Activated CD8-positive, alpha-beta T cell treated with anti-CD3 and anti-CD28 coated beads, Interleukin-2, amount 10 ng/mL, durations not matched to agents 7 days and 5 days (primary cell): ENCODE measurements at regions of chr2 and their contacts with region 1.

Region 1: GRCh38 chr2:191020221-191020741 is 6.3 kb upstream of the STAT1 start:
- DNase-seq: peak; percentile 94
- ATAC-seq: peak; percentile 75
- H3K4me3 Mint-ChIP-seq: no peak overlapping the region
- H3K27ac Mint-ChIP-seq: no peak overlapping the region
- H3K4me1 Mint-ChIP-seq: peaks cover 38% of the 10 kb centered on the region
- H3K27me3 Mint-ChIP-seq: no peaks in the 10 kb centered on the region

Region 2: DNA sequence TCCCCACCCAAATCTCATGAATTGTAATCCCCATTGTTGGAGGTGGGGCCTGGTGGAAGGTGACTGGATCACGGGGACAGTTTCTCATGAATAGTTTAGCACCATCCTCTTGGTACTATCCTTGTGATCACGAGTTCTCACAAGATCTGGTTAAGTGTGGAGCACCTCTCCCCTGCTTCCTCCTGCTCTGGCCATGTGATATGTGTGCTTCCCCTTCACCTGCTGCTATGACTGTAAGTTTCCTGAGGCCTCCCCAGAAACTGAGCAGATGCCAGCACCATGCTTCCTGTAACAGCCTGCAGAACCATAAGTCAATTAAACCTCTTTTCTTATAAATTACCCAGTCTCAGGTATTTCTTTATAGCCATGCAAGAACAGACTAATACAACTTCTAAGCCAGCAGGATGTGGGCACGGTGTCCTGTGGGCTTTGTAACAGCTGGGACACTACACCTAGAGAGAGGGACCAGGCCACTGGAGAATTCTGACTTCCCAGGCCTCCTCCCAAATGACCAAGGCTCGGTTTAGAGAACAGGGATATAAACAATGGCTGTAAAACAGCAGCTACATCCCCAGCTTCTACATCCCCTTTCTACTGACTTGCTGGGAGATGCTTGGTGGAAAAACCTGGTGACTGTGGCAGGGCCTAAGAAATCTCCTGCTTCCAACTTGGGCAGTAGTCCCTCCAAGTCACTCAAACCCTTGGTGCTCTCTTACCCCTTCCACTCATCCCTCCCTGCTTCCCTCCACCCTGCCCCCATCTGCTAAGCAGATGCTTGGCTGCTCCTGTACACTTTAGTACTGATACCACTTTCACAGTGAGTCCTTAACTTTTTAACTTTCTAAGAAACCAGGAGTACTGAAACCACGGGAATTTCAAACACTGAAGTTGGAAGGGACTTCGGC is 16.6 kb before region 1 on chr2:
- CTCF ChIA-PET with region 1: interaction called, 4 read pairs
- POLR2A ChIA-PET with region 1: interaction called, 37 read pairs
- DNase-seq: no peak
- ATAC-seq: peak; percentile 12
- H3K4me3 Mint-ChIP-seq: no peak overlapping the region
- H3K27ac Mint-ChIP-seq: peak overlapping the region; percentile 31
- H3K4me1 Mint-ChIP-seq: peaks cover 92% of the 10 kb centered on the region
- H3K27me3 Mint-ChIP-seq: no peaks in the 10 kb centered on the region

Region 3: DNA sequence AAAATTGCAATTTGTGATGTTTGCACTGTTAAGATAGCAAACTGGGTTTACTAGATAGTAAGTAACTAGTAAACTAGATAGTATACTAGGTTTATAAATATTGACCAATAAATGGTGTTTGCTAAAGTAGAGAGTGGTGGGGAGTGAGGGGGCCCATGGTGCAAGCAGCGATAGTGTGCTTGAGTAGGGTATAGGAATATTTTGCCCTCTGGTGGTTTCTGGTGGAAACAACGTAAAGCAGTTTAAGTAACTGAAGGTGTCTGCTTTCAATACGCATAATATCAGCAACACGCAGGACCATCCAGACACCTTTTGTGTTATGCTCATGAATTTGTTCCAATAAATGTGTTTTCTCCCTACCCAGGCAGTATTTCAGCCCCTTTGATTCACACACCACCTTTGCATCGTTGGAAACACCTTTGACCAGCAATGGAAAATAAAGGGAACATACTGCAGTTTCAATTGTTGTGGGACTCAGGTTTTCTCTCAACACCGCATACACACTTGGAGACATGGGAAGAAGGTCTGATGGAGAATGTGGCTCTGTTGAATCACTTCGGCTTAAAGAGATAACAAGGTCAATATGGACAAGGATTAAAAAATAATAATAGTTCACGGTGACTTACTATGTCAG is 10.4 kb after region 1 on chr2:
- CTCF ChIA-PET with region 1: interaction called, 12 read pairs
- POLR2A ChIA-PET with region 1: interaction called, 295 read pairs
- DNase-seq: peak; percentile 69
- ATAC-seq: peak; percentile 87
- H3K4me3 Mint-ChIP-seq: no peak overlapping the region
- H3K27ac Mint-ChIP-seq: peak overlapping the region; percentile 20
- H3K4me1 Mint-ChIP-seq: peaks cover 60% of the 10 kb centered on the region
- H3K27me3 Mint-ChIP-seq: no peaks in the 10 kb centered on the region

Region 4: GRCh38 chr2:191078165-191078867 is 58.0 kb after region 1 on chr2:
- CTCF ChIA-PET with region 1: no interaction called
- POLR2A ChIA-PET with region 1: no interaction called
- DNase-seq: no peak
- ATAC-seq: peak; percentile 62
- H3K4me3 Mint-ChIP-seq: peak overlapping the region; percentile 54
- H3K27ac Mint-ChIP-seq: peak overlapping the region; percentile 58
- H3K4me1 Mint-ChIP-seq: peaks cover 56% of the 10 kb centered on the region
- H3K27me3 Mint-ChIP-seq: no peaks in the 10 kb centered on the region

Region 5: GRCh38 chr2:191302459-191303139 is 282.3 kb after region 1 on chr2:
- CTCF ChIA-PET with region 1: no interaction called
- POLR2A ChIA-PET with region 1: no interaction called
- DNase-seq: no peak
- ATAC-seq: no peak
- H3K4me3 Mint-ChIP-seq: no peak overlapping the region
- H3K27ac Mint-ChIP-seq: no peak overlapping the region
- H3K4me1 Mint-ChIP-seq: no peaks in the 10 kb centered on the region
- H3K27me3 Mint-ChIP-seq: peaks cover 3% of the 10 kb centered on the region